CD4-positive, alpha-beta T cell (primary cell): ENCODE measurements at regions of chr2 and their contacts with region 1.

Region 1: GRCh38 chr2:7707723-7708122 is 790.5 kb downstream of the RNF144A start:
- DNase-seq: no peak
- ATAC-seq: no peak
- H3K4me3 ChIP-seq: no peak overlapping the region
- H3K4me3 Mint-ChIP-seq: no peak overlapping the region
- H3K27ac ChIP-seq: no peak overlapping the region
- H3K27ac Mint-ChIP-seq: no peak overlapping the region
- H3K4me1 ChIP-seq: no peaks in the 10 kb centered on the region
- H3K4me1 Mint-ChIP-seq: peaks cover 5% of the 10 kb centered on the region
- H3K27me3 ChIP-seq: no peaks in the 10 kb centered on the region
- H3K27me3 Mint-ChIP-seq: no peaks in the 10 kb centered on the region
- CTCF ChIP-seq: no peak

Region 2: GRCh38 chr2:7639476-7639875 is 68.2 kb before region 1 on chr2:
- CTCF ChIA-PET with region 1: no interaction called
- POLR2A ChIA-PET with region 1: no interaction called
- intact Hi-C with region 1: loop called in 1 of 2 experiments (anchors 2 kb)
- DNase-seq: no peak
- ATAC-seq: no peak
- H3K4me3 ChIP-seq: no peak overlapping the region
- H3K4me3 Mint-ChIP-seq: no peak overlapping the region
- H3K27ac ChIP-seq: no peak overlapping the region
- H3K27ac Mint-ChIP-seq: no peak overlapping the region
- H3K4me1 ChIP-seq: no peaks in the 10 kb centered on the region
- H3K4me1 Mint-ChIP-seq: no peaks in the 10 kb centered on the region
- H3K27me3 ChIP-seq: no peaks in the 10 kb centered on the region
- H3K27me3 Mint-ChIP-seq: no peaks in the 10 kb centered on the region
- CTCF ChIP-seq: no peak

Region 3: GRCh38 chr2:7930800-7931635 is 223.3 kb after region 1 on chr2:
- CTCF ChIA-PET with region 1: no interaction called
- POLR2A ChIA-PET with region 1: no interaction called
- intact Hi-C with region 1: no loop called
- DNase-seq: no peak
- ATAC-seq: no peak
- H3K4me3 ChIP-seq: no peak overlapping the region
- H3K4me3 Mint-ChIP-seq: no peak overlapping the region
- H3K27ac ChIP-seq: no peak overlapping the region
- H3K27ac Mint-ChIP-seq: no peak overlapping the region
- H3K4me1 ChIP-seq: no peaks in the 10 kb centered on the region
- H3K4me1 Mint-ChIP-seq: no peaks in the 10 kb centered on the region
- H3K27me3 ChIP-seq: no peaks in the 10 kb centered on the region
- H3K27me3 Mint-ChIP-seq: no peaks in the 10 kb centered on the region
- CTCF ChIP-seq: no peak